ENCODE measurements at regions of chr12 and their contacts with region 1.

Region 1: DNA sequence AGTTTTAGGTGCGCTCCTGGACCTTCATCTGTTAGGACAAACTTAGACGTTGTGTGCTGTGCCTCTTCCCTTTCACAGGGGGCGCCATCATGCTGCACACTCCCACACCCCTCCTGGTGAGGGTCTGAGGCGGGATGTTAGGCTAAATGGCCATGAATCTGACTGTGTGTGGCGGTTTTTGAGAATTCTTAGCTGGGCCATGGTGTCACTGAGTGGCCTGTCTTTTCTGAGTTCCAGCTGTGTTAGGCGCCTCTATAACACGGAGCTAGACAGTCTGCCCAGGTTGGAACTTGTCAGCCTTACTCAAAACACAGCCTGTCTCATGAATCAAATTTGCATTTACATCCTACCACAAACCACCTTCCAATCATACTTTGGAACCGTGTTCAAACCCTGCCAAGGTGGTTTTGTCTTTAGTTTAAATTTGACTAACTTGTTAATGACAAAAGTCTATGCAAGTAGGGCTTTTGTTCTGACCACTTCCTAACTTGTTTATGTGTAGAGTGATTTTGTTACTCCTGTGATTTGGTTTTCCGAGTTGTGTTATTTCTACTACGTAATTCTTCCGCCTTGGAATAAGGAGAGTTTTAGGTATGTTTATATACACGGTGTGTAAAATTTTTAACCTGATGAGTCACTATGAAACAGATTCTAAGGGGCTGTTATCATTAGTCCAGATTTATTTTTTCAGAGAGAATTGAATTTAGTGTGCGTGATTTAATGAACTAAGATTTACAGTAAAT is 19.6 kb downstream of the ACVR1B start:
- DNase-seq: peak; percentile 59
- ATAC-seq: peak; percentile 94
- H3K4me3 ChIP-seq: peak overlapping the region; percentile 38; the same call in 1 of the 2 replicates
- H3K27ac ChIP-seq: peak overlapping the region; percentile 48
- H3K4me1 ChIP-seq: peaks cover 18% of the 10 kb centered on the region
- H3K27me3 ChIP-seq: no peaks in the 10 kb centered on the region
- CTCF ChIP-seq: peak; percentile 77

Region 2: GRCh38 chr12:51879102-51879501 is 92.0 kb before region 1 on chr12:
- CTCF ChIA-PET with region 1: no interaction called
- POLR2A ChIA-PET with region 1: no interaction called
- intact Hi-C with region 1: no loop called
- DNase-seq: no peak
- ATAC-seq: no peak
- H3K4me3 ChIP-seq: no peak overlapping the region
- H3K27ac ChIP-seq: no peak overlapping the region
- H3K4me1 ChIP-seq: no peaks in the 10 kb centered on the region
- H3K27me3 ChIP-seq: no peaks in the 10 kb centered on the region
- CTCF ChIP-seq: no peak

Region 3: GRCh38 chr12:52069327-52070184 is 98.5 kb after region 1 on chr12 and contains the start of gene ATG101:
- CTCF ChIA-PET with region 1: interaction called, 11 read pairs
- POLR2A ChIA-PET with region 1: no interaction called
- intact Hi-C with region 1: no loop called
- DNase-seq: peak; percentile 95
- ATAC-seq: peak; percentile 98
- H3K4me3 ChIP-seq: peak within 1 kb of the TSS; percentile 83
- H3K27ac ChIP-seq: peak within 1 kb of the TSS; percentile 66
- H3K4me1 ChIP-seq: peaks cover 19% of the 10 kb centered on the region
- H3K27me3 ChIP-seq: no peaks in the 10 kb centered on the region
- CTCF ChIP-seq: peak; percentile 80
- total RNA-seq, gene ATG101: 110 and 167 TPM in 2 replicates

Measured in PC-3 (cell line).